IMR-90 (cell line): ENCODE measurements at regions of chr2 and their contacts with region 1.

Region 1: GRCh38 chr2:51111532-51111931 is 79.6 kb upstream of the NRXN1 start:
- DNase-seq: no peak
- ATAC-seq: no peak
- H3K4me3 ChIP-seq: no peak overlapping the region
- H3K27ac ChIP-seq: no peak overlapping the region
- H3K4me1 ChIP-seq: no peaks in the 10 kb centered on the region
- H3K27me3 ChIP-seq: no peaks in the 10 kb centered on the region
- CTCF ChIP-seq: no peak
- POLR2A ChIP-seq: no peak
- RAD21 ChIP-seq: no peak

Region 2: GRCh38 chr2:51829477-51829876 is 717.9 kb after region 1 on chr2:
- CTCF ChIA-PET with region 1: no interaction called
- POLR2A ChIA-PET with region 1: no interaction called
- dilution Hi-C with region 1: no loop called
- in situ Hi-C with region 1: no loop called
- intact Hi-C with region 1: loop called (anchors 10 kb)
- DNase-seq: no peak
- ATAC-seq: no peak
- H3K4me3 ChIP-seq: no peak overlapping the region
- H3K27ac ChIP-seq: no peak overlapping the region
- H3K4me1 ChIP-seq: no peaks in the 10 kb centered on the region
- H3K27me3 ChIP-seq: no peaks in the 10 kb centered on the region
- CTCF ChIP-seq: no peak
- POLR2A ChIP-seq: no peak
- RAD21 ChIP-seq: no peak